Mucosa of descending colon (tissue), 3 donors: ENCODE measurements at regions of chr1 and their contacts with region 1.

Region 1: DNA sequence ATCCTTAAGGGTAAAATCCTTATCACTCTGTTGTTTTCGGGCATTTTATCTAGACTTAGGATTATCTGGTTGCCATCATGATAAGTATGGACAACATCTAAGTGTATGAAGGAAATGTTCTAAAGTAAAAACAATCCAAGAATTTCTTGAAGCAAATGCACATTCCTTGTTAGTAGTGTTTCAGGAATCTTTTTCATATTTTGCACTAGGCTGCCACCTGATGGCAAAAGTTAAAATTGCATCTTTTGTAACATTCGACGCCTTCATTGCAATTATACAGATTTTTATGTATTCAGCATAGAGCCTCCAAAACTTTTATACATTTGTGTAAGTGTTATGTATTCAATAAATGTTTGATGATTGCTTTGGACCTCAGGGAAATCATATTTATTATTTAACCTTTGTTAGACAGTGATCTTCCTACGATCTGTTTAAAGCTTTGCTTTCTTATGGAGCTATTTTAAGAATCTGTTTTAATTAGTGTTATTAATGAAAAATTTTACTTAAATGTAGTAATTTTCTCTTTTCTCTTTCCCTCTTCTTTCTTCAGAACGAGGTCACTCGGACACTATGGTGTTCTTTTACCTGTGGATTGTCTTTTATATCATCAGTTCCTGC is 49.4 kb upstream of the KIAA1614 start:
- DNase-seq: peak in 1 of 3 donors; percentile 75
- ATAC-seq: peak; percentile 54
- H3K4me3 ChIP-seq: no peak overlapping the region
- H3K4me1 ChIP-seq: no peaks in the 10 kb centered on the region
- CTCF ChIP-seq: peak; percentile 20

Region 2: GRCh38 chr1:180515864-180516388 is 347.3 kb before region 1 on chr1:
- intact Hi-C with region 1: loop called in 1 of 2 experiments (anchors 5 kb)
- DNase-seq: peak in 2 of 3 donors; percentile 42 to 70
- ATAC-seq: peak; percentile 94
- H3K4me3 ChIP-seq: no peak overlapping the region
- H3K4me1 ChIP-seq: no peaks in the 10 kb centered on the region
- CTCF ChIP-seq: peak; percentile 70

Region 3: DNA sequence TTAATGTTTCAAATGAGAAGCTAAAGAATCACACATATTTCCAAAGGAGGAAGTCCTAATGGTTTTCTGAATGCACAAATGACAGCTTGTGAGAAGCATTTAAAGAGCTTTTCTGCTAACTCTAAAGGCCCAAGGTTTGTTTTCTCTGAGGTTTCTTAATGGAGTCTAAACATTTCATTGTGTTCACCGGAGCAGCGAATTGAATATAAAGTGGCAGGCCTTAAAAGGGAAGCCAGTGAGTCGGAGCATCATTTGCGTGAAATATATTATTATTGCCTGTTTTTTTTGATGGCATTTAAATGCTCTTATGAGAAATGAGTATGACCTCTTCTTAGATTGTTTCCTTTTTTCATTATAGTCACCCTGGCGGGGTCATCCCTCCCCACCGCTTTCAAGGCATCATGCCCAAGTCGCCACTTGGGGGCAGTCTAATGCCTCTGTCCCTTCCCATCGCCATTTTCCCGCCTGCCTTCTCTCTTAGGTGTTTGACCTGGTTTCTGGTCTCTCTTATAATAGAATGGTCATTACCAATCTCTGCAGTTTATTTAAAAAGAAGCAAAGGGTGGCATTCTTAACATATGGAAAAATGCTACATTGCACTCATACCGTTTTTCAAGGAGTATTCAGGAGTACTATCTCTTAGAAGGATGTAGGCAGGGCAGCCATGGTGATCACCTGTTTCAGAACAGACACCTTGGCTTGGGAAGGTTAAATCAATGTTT is 329.8 kb before region 1 on chr1:
- intact Hi-C with region 1: loop called (anchors 5 to 10 kb)
- DNase-seq: peak; percentile 52 to 85 (median 75)
- ATAC-seq: peak; percentile 86
- H3K4me3 ChIP-seq: no peak overlapping the region
- H3K4me1 ChIP-seq: no peaks in the 10 kb centered on the region
- CTCF ChIP-seq: peak; percentile 70

Region 4: DNA sequence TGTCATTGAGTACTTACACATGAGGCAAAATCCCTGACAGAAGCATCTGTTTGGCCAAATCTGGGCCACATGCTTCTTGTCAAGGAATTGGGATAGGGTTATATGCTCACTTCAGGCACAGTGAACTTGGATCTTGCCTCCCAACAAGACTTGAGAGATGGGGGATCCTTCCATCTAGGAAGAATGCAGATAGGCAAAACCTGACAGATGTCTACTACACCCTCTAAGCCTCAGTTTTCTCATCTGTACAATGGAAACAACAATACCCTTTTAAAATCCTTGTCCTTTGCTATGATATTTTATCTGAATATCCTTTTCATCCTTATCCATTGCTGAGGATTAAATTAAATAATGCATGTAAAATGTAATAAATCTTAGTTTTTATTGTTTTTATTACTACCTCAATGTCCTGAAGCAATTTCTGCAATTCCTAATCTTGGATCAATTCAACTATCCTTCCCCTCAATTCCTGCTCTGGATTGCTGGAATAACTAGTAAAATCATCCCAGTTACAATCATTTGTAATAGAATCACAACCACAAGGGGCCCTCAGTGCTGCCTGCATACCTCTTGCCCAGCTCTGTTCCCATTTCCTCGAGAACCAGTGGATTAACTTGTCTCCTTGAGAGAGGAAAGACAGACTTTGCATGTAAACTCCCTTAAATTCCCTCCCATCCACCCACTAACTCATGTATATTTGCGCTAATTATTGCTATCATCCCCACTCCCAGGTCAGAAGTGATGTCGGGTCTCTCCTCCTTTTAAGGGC is 239.5 kb before region 1 on chr1:
- intact Hi-C with region 1: loop called in 1 of 2 experiments (anchors 10 kb)
- DNase-seq: peak in 1 of 3 donors; percentile 27
- ATAC-seq: no peak
- H3K4me3 ChIP-seq: no peak overlapping the region
- H3K4me1 ChIP-seq: no peaks in the 10 kb centered on the region
- CTCF ChIP-seq: no peak

Region 5: DNA sequence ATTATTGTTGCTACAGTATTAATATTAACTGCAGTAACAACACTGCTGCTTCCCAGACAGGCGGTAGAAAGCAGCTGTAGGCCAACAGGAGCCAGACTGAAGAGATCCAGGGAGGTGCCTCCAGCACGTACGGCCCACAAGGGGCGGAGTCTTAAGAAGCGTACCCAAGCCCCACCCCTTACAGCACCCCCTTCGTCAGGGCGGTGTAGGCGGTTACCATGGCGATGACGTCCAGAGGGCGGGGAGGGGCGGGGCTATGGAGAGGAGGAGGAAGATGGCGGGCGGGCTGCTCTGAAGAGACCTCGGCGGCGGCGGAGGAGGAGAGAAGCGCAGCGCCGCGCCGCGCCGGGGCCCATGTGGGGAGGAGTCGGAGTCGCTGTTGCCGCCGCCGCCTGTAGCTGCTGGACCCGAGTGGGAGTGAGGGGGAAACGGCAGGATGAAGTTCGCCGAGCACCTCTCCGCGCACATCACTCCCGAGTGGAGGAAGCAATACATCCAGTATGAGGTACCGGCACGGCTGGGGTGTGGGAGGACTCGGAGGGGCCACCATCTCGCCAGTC is 231.4 kb before region 1 on chr1 and contains the start of gene XPR1:
- intact Hi-C with region 1: loop called (anchors 5 to 10 kb)
- DNase-seq: peak; percentile 98 to 99 (median 99)
- ATAC-seq: peak; percentile 99
- H3K4me3 ChIP-seq: peak within 1 kb of the TSS; percentile 61
- H3K4me1 ChIP-seq: peaks cover 5% of the 10 kb centered on the region
- CTCF ChIP-seq: no peak
- total RNA-seq, gene XPR1: 31.6 to 64.9 (median 34.6) TPM

Region 6: GRCh38 chr1:180765151-180765550 is 98.1 kb before region 1 on chr1:
- intact Hi-C with region 1: no loop called
- DNase-seq: no peak
- ATAC-seq: no peak
- H3K4me3 ChIP-seq: no peak overlapping the region
- H3K4me1 ChIP-seq: no peaks in the 10 kb centered on the region
- CTCF ChIP-seq: no peak